MCF 10A (cell line): ENCODE measurements at regions of chr3 and their contacts with region 1.

Region 1: GRCh38 chr3:107064445-107065060 is 312.7 kb upstream of the CCDC54 start:
- DNase-seq: peak; percentile 85
- H3K4me3 Mint-ChIP-seq: no peak overlapping the region
- H3K27ac Mint-ChIP-seq: peak overlapping the region; percentile 29
- H3K4me1 Mint-ChIP-seq: peaks cover 39% of the 10 kb centered on the region
- H3K27me3 Mint-ChIP-seq: no peaks in the 10 kb centered on the region
- CTCF ChIP-seq: peak; percentile 83

Region 2: DNA sequence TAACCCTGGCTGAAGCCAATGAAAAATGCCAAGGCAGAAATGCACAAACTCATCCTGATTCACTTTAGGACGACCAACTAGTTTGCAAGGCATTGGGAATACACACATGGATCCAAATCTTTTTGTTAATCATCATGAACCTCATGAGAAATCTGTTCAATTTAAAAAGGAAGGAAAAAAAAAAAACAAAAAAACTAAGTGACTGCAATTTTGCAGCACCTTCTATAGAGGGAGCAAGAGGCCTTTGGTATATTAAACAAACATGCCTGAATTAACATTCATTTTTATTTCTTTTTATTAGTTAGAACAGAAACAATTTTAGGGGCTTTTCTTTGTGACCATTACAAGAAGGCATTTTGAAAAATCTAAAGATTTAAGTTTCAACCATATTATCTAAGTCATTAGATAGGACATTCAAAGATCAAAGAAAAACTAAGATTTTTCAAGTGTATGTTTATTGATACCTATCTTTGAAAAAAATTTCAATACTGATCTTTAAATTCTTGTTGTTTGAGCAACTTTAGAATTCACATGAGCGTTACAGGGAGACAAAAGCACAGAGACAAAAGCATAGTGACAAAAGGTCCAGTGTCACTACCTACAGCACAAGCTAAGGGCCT is 1378.2 kb before region 1 on chr3:
- CTCF ChIA-PET with region 1: interaction called, 3 read pairs
- POLR2A ChIA-PET with region 1: no interaction called
- intact Hi-C with region 1: loop called (anchors 2 kb)
- DNase-seq: peak; percentile 23
- H3K4me3 Mint-ChIP-seq: no peak overlapping the region
- H3K27ac Mint-ChIP-seq: peak overlapping the region; percentile 27
- H3K4me1 Mint-ChIP-seq: peaks cover under 1% of the 10 kb centered on the region
- H3K27me3 Mint-ChIP-seq: no peaks in the 10 kb centered on the region
- CTCF ChIP-seq: peak; percentile 73

Region 3: DNA sequence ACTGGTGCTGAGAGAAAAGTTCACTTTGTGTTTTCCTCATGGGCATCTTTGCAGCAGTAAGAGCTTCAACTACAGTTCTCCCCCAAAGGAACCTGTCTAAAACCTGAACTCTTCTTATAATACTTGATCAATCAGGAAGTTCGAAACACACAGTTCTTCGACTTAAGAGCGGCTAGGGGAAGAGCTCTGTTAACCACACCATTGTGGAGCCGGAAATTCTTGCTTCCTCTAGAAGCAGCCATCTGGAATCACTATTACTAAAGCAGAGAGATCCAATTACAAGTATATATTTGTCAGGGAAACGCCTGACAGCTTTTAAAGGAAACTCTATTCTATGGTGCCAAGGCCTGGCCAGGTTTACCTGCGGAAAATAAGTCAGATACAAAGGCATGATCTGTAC is 858.4 kb before region 1 on chr3:
- CTCF ChIA-PET with region 1: no interaction called
- POLR2A ChIA-PET with region 1: no interaction called
- intact Hi-C with region 1: loop called (anchors 1 kb)
- DNase-seq: no peak
- H3K4me3 Mint-ChIP-seq: no peak overlapping the region
- H3K27ac Mint-ChIP-seq: no peak overlapping the region
- H3K4me1 Mint-ChIP-seq: no peaks in the 10 kb centered on the region
- H3K27me3 Mint-ChIP-seq: no peaks in the 10 kb centered on the region
- CTCF ChIP-seq: no peak

Region 4: DNA sequence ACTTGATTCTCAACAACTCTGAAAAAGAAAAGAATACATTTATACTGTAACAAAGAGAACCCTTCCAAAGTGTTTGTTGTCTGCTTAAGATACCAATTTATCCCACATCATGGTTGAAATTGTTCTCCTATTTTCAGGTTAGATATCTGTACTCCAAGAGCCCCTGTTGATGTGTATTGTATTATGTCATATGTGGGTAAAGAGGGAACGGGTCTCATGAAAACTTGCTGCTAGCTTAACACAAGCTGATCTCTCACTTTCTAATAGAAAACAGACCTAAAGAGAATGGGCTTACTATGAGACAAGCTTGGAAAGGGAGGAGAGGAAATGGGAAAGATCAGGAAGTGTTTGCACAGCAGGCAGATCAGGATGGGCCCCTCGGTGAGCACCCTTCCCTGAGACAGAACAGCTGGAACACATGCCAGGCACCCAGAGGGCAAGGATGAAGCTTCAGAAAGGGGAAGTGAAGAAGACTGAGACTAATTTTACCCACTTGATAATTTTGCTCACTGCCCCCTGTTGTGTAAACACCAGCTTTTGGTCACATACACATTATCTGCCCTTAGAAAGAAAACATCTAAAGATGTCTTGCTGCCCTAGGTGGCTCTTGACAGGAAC is 435.2 kb before region 1 on chr3:
- CTCF ChIA-PET with region 1: interaction called, 22 read pairs
- POLR2A ChIA-PET with region 1: no interaction called
- intact Hi-C with region 1: loop called (anchors 1 kb)
- DNase-seq: no peak
- H3K4me3 Mint-ChIP-seq: no peak overlapping the region
- H3K27ac Mint-ChIP-seq: no peak overlapping the region
- H3K4me1 Mint-ChIP-seq: peaks cover 20% of the 10 kb centered on the region
- H3K27me3 Mint-ChIP-seq: no peaks in the 10 kb centered on the region
- CTCF ChIP-seq: no peak

Region 5: DNA sequence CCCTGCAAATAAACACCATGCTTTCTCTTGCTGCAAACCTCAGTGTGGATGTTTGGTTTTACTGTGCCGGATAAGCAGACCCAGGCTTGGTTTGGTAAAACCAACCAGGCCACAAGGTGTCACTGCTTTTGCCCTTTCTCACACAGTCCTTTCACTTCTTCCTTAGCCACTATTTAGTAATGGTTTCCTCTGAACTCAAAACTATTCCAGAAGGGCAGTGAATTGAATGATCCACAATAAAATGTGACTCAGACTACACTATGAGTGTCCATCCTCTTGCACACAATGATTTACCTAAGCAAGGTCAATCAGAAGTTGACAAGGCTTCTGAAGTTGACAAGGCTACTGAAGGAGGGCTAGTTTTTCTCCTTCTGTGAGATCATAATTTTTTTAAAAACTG is 239.7 kb before region 1 on chr3:
- CTCF ChIA-PET with region 1: interaction called, 4 read pairs
- POLR2A ChIA-PET with region 1: no interaction called
- intact Hi-C with region 1: loop called (anchors 10 kb)
- DNase-seq: peak; percentile 35
- H3K4me3 Mint-ChIP-seq: no peak overlapping the region
- H3K27ac Mint-ChIP-seq: no peak overlapping the region
- H3K4me1 Mint-ChIP-seq: peaks cover 3% of the 10 kb centered on the region
- H3K27me3 Mint-ChIP-seq: no peaks in the 10 kb centered on the region
- CTCF ChIP-seq: no peak

Region 6: GRCh38 chr3:107184375-107184774 is 119.8 kb after region 1 on chr3:
- CTCF ChIA-PET with region 1: no interaction called
- POLR2A ChIA-PET with region 1: no interaction called
- intact Hi-C with region 1: no loop called
- DNase-seq: no peak
- H3K4me3 Mint-ChIP-seq: no peak overlapping the region
- H3K27ac Mint-ChIP-seq: no peak overlapping the region
- H3K4me1 Mint-ChIP-seq: no peaks in the 10 kb centered on the region
- H3K27me3 Mint-ChIP-seq: no peaks in the 10 kb centered on the region
- CTCF ChIP-seq: no peak

Region 7: GRCh38 chr3:107468802-107469201 is 404.2 kb after region 1 on chr3:
- CTCF ChIA-PET with region 1: no interaction called
- POLR2A ChIA-PET with region 1: no interaction called
- intact Hi-C with region 1: no loop called
- DNase-seq: no peak
- H3K4me3 Mint-ChIP-seq: no peak overlapping the region
- H3K27ac Mint-ChIP-seq: no peak overlapping the region
- H3K4me1 Mint-ChIP-seq: no peaks in the 10 kb centered on the region
- H3K27me3 Mint-ChIP-seq: no peaks in the 10 kb centered on the region
- CTCF ChIP-seq: no peak

Region 8: DNA sequence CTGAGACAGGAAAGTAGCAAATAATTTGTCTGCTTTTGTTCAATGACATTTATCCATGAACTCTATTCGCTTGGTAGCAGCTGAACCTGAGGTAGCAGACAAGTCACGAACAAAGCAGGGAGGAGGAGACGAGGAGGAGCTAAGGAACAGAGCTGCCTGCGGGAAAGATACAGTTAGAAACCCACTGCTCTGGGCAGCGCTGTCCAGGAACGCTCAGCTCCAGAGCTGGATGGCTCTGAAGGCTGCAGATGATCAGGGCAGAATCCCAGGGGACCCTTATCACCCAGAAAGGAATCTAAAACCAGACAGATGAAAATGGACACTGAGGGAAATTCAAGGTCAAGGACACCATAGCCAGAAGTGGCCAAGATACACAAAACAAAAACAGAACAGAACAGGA is 768.5 kb after region 1 on chr3:
- CTCF ChIA-PET with region 1: no interaction called
- POLR2A ChIA-PET with region 1: no interaction called
- intact Hi-C with region 1: no loop called
- DNase-seq: no peak
- H3K4me3 Mint-ChIP-seq: no peak overlapping the region
- H3K27ac Mint-ChIP-seq: no peak overlapping the region
- H3K4me1 Mint-ChIP-seq: no peaks in the 10 kb centered on the region
- H3K27me3 Mint-ChIP-seq: no peaks in the 10 kb centered on the region
- CTCF ChIP-seq: no peak